ENCODE measurements at regions of chr19 and their contacts with region 1.

Region 1: GRCh38 chr19:2711172-2711874 is 8.8 kb upstream of the GNG7 start:
- DNase-seq: peak; percentile 76
- ATAC-seq: no peak
- H3K4me3 ChIP-seq: peak overlapping the region in 2 of 5 experiments; percentile 7 to 22
- H3K4me3 Mint-ChIP-seq: peak overlapping the region; percentile 73
- H3K27ac ChIP-seq: peak overlapping the region; percentile 84 to 97
- H3K27ac Mint-ChIP-seq: peak overlapping the region; percentile 96
- H3K4me1 ChIP-seq: peaks cover 26 to 40% of the 10 kb centered on the region in 2 donors
- H3K4me1 Mint-ChIP-seq: peaks cover 40% of the 10 kb centered on the region
- H3K27me3 ChIP-seq: no peaks in the 10 kb centered on the region
- H3K27me3 Mint-ChIP-seq: no peaks in the 10 kb centered on the region
- CTCF ChIP-seq: no peak

Region 2: DNA sequence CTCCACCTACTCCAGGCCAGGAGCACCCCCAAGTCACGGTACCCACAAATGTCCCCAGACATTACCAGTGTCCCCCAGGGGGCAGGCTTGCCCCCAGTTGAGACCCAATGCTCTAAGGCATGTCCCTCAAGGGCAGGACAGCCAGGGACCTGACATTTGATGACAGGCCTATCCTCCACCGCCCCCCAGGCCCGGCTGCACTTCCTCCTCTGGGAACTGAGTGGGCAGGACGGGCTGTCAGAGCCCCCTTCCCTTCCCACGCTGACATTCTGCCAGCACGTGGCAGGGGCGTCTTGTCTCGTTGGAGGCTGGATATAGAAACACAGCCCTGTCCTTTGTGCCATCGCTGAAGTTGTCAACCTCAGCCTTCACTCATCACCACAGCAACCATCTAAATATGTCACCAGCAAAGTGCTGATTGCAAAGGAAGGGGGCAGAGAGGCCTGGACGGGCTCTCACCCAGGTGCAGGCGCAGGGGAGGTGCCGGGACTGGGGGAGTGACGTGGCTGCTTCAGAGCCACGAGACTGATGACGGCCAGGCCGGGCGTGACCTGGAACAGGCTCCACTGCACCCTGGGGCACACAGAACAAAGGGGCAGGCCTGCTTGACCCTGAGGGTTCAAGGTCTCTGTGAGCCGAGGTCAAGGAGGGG is 47.3 kb before region 1 on chr19:
- CTCF ChIA-PET with region 1: interaction called, 7 read pairs
- POLR2A ChIA-PET with region 1: interaction called, 5 read pairs
- intact Hi-C with region 1: loop called (anchors 1 kb)
- DNase-seq: peak; percentile 95
- ATAC-seq: peak; percentile 86
- H3K4me3 ChIP-seq: no peak overlapping the region
- H3K4me3 Mint-ChIP-seq: peak overlapping the region; percentile 78
- H3K27ac ChIP-seq: peak overlapping the region; percentile 92
- H3K27ac Mint-ChIP-seq: peak overlapping the region; percentile 98
- H3K4me1 ChIP-seq: peaks cover 35 to 43% of the 10 kb centered on the region in 2 donors
- H3K4me1 Mint-ChIP-seq: peaks cover 59% of the 10 kb centered on the region
- H3K27me3 ChIP-seq: no peaks in the 10 kb centered on the region
- H3K27me3 Mint-ChIP-seq: no peaks in the 10 kb centered on the region
- CTCF ChIP-seq: peak; percentile 75

Region 3: GRCh38 chr19:2678043-2678671 is 33.2 kb before region 1 on chr19:
- CTCF ChIA-PET with region 1: interaction called, 6 read pairs
- POLR2A ChIA-PET with region 1: interaction called, 25 read pairs
- intact Hi-C with region 1: loop called (anchors 1 kb)
- DNase-seq: peak; percentile 91
- ATAC-seq: peak; percentile 59
- H3K4me3 ChIP-seq: no peak overlapping the region
- H3K4me3 Mint-ChIP-seq: peak overlapping the region; percentile 49
- H3K27ac ChIP-seq: peak overlapping the region; percentile 99 to 100
- H3K27ac Mint-ChIP-seq: peak overlapping the region; percentile 88
- H3K4me1 ChIP-seq: peaks cover 56 to 66% of the 10 kb centered on the region in 2 donors
- H3K4me1 Mint-ChIP-seq: peaks cover 70% of the 10 kb centered on the region
- H3K27me3 ChIP-seq: no peaks in the 10 kb centered on the region
- H3K27me3 Mint-ChIP-seq: no peaks in the 10 kb centered on the region
- CTCF ChIP-seq: no peak

Region 4: DNA sequence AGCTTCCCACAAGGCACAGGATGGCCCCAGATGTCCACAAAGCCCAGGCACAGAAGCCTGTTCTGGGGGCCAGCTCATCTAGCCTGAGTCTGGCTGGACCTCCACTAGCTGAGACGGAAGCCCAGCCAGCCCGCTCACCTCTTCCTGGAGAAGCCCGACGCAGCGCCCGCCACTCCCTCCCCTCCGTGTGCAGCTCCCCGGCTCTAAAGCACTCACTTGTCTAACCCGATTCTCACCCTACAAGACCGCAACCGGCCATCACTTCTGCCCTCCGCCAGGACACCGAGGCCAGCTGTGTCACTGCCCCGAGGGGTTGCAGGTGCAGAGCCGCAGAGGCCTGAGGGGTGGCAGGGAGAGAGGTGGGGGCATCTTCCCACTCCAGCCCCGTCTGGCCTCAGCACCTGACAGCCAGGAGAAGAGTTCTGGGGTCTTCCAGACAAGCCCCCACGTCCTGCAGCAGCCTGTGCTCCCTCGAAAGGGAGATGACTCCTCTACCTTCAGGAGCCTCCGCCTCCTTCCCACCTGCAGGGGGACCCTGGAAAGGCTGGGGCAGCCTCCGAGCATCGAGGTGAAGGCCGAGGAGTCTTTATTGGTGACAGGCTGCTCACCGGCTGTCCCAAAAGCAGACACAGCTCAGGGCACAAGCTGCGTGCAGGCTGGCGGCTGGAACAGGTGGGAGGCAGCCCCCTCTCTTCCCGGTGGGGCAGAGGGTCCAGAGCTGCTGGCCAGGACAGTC is 15.7 kb after region 1 on chr19:
- CTCF ChIA-PET with region 1: interaction called, 10 read pairs
- POLR2A ChIA-PET with region 1: no interaction called
- intact Hi-C with region 1: no loop called
- DNase-seq: peak; percentile 41
- ATAC-seq: no peak
- H3K4me3 ChIP-seq: peak overlapping the region in 2 of 5 experiments; percentile 6 to 9
- H3K4me3 Mint-ChIP-seq: peak overlapping the region; percentile 70
- H3K27ac ChIP-seq: peak overlapping the region in 1 of 2 donors; percentile 6
- H3K27ac Mint-ChIP-seq: no peak overlapping the region
- H3K4me1 ChIP-seq: peaks cover 20 to 26% of the 10 kb centered on the region in 2 donors
- H3K4me1 Mint-ChIP-seq: peaks cover 22% of the 10 kb centered on the region
- H3K27me3 ChIP-seq: peaks cover 0 to 7% (median 2%) of the 10 kb centered on the region in 4 experiments
- H3K27me3 Mint-ChIP-seq: peaks cover 4% of the 10 kb centered on the region
- CTCF ChIP-seq: no peak